Cardiac septum (tissue), 1 donor: ENCODE measurements at regions of chr2 and their contacts with region 1.

Region 1: GRCh38 chr2:55111570-55112228 is 61.4 kb upstream of the RTN4 start:
- DNase-seq: peak; percentile 86

Region 2: GRCh38 chr2:55159037-55159651 is 47.4 kb after region 1 on chr2:
- intact Hi-C with region 1: loop called (anchors 5 kb)
- DNase-seq: no peak